ENCODE measurements at regions of chr15 and their contacts with region 1.

Region 1: DNA sequence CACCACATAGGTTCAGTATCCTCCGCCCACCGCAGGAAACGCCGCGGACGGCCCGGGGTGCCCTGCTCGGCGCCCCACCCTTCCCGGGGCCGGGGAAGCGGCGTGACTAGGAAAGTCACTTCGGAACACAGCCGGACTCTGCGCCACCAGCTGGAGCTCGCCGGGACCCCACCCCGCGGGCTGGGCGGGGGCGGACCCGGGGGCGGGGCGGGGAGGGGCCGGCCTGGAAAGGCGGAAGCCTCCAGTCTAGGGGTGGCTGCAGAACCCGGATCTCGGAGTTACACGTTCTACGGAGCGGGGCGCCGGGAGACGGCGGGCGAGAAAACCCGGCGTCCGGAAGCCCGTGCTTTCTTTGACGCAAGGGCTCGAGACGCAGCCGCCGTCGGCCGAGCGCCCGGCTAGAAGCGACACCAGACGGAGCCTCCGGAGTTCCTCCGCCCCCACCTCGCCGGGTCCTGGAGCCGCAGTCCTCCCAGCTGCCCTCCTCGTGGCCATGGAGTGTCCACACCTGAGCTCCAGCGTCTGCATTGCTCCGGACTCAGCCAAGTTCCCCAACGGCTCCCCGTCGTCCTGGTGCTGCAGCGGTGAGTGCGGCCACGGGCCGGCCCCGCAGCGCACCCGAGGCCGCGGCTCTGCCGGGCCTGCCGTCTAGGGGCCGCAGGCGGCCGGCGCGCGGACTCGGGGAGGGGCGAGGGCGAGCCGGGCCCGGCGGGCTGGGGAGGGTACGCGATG is at the start of gene USP3:
- DNase-seq: peak; percentile 88 to 96 (median 93)
- ATAC-seq: peak; percentile 67
- H3K4me3 ChIP-seq: peak within 1 kb of the TSS; percentile 93
- H3K4me3 Mint-ChIP-seq: peak within 1 kb of the TSS; percentile 96
- H3K27ac ChIP-seq: peak within 1 kb of the TSS; percentile 97 to 99
- H3K27ac Mint-ChIP-seq: peak within 1 kb of the TSS; percentile 92
- H3K4me1 ChIP-seq: peaks cover 58% of the 10 kb centered on the region
- H3K4me1 Mint-ChIP-seq: peaks cover 77% of the 10 kb centered on the region
- H3K27me3 ChIP-seq: no peaks in the 10 kb centered on the region
- H3K27me3 Mint-ChIP-seq: no peaks in the 10 kb centered on the region
- CTCF ChIP-seq: peak; percentile 36
- total RNA-seq, gene USP3: 280 to 282 TPM

Region 2: GRCh38 chr15:63430766-63431449 is 73.5 kb before region 1 on chr15:
- CTCF ChIA-PET with region 1: no interaction called
- POLR2A ChIA-PET with region 1: no interaction called
- intact Hi-C with region 1: no loop called
- DNase-seq: no peak
- ATAC-seq: no peak
- H3K4me3 ChIP-seq: no peak overlapping the region
- H3K4me3 Mint-ChIP-seq: no peak overlapping the region
- H3K27ac ChIP-seq: no peak overlapping the region
- H3K27ac Mint-ChIP-seq: no peak overlapping the region
- H3K4me1 ChIP-seq: no peaks in the 10 kb centered on the region
- H3K4me1 Mint-ChIP-seq: peaks cover 13% of the 10 kb centered on the region
- H3K27me3 ChIP-seq: no peaks in the 10 kb centered on the region
- H3K27me3 Mint-ChIP-seq: peaks cover 3% of the 10 kb centered on the region
- CTCF ChIP-seq: no peak

Region 3: GRCh38 chr15:63473999-63474809 is 30.2 kb before region 1 on chr15:
- CTCF ChIA-PET with region 1: interaction called, 24 read pairs
- POLR2A ChIA-PET with region 1: interaction called, 367 read pairs
- intact Hi-C with region 1: loop called (anchors 1 kb)
- DNase-seq: peak in 11 of 14 experiments; percentile 26 to 87 (median 53)
- ATAC-seq: peak; percentile 57
- H3K4me3 ChIP-seq: no peak overlapping the region
- H3K4me3 Mint-ChIP-seq: peak overlapping the region; percentile 3
- H3K27ac ChIP-seq: peak overlapping the region in 1 of 2 donors; percentile 35
- H3K27ac Mint-ChIP-seq: peak overlapping the region; percentile 82
- H3K4me1 ChIP-seq: peaks cover 61% of the 10 kb centered on the region
- H3K4me1 Mint-ChIP-seq: peaks cover 68% of the 10 kb centered on the region
- H3K27me3 ChIP-seq: no peaks in the 10 kb centered on the region
- H3K27me3 Mint-ChIP-seq: no peaks in the 10 kb centered on the region
- CTCF ChIP-seq: no peak

Region 4: DNA sequence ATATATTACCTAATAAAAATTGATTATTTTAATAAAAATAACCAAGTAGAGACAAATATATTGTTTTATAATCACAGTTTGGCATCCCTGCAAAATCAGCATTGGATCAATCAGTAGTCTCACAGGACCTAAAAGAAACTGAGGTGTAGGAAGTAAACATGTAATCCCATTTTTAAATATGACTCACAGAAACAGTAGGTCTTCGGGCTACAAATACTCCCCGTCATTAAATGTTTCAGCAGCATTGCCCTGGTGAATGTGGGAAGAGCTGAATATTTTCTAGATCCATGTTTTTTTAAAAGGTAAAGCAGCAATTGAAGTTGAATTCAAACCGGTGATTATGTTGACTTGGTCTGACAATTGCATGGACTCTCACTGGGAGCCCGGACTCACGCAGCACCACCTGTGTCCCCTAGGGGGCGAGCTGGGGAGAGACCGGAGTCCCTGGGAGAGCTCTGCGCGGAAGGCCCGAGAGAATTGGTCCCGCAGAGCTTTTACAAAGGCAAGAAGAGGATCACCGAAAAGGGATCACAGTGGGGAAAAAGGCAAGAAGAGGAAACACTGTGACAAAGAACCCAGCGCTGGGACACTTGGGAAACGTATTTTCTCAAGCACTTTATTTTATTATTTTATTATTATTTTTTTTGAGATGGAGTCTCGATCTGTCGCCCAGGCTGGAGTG is 17.2 kb before region 1 on chr15:
- CTCF ChIA-PET with region 1: interaction called, 65 read pairs
- POLR2A ChIA-PET with region 1: interaction called, 367 read pairs
- intact Hi-C with region 1: loop called in 1 of 2 experiments (anchors 2 kb)
- DNase-seq: peak; percentile 79 to 93 (median 88)
- ATAC-seq: peak; percentile 90
- H3K4me3 ChIP-seq: no peak overlapping the region
- H3K4me3 Mint-ChIP-seq: peak overlapping the region; percentile 2
- H3K27ac ChIP-seq: peak overlapping the region in 1 of 2 donors; percentile 33
- H3K27ac Mint-ChIP-seq: peak overlapping the region; percentile 29
- H3K4me1 ChIP-seq: peaks cover 67% of the 10 kb centered on the region
- H3K4me1 Mint-ChIP-seq: peaks cover 67% of the 10 kb centered on the region
- H3K27me3 ChIP-seq: no peaks in the 10 kb centered on the region
- H3K27me3 Mint-ChIP-seq: no peaks in the 10 kb centered on the region
- CTCF ChIP-seq: peak; percentile 96

Region 5: GRCh38 chr15:63522225-63522578 is 17.8 kb after region 1 on chr15:
- CTCF ChIA-PET with region 1: interaction called, 18 read pairs
- POLR2A ChIA-PET with region 1: interaction called, 32 read pairs
- intact Hi-C with region 1: loop called in 1 of 2 experiments (anchors 2 kb)
- DNase-seq: no peak
- ATAC-seq: no peak
- H3K4me3 ChIP-seq: no peak overlapping the region
- H3K4me3 Mint-ChIP-seq: peak overlapping the region; percentile 36
- H3K27ac ChIP-seq: no peak overlapping the region
- H3K27ac Mint-ChIP-seq: no peak overlapping the region
- H3K4me1 ChIP-seq: peaks cover 59% of the 10 kb centered on the region
- H3K4me1 Mint-ChIP-seq: peaks cover 98% of the 10 kb centered on the region
- H3K27me3 ChIP-seq: no peaks in the 10 kb centered on the region
- H3K27me3 Mint-ChIP-seq: no peaks in the 10 kb centered on the region
- CTCF ChIP-seq: no peak

Region 6: DNA sequence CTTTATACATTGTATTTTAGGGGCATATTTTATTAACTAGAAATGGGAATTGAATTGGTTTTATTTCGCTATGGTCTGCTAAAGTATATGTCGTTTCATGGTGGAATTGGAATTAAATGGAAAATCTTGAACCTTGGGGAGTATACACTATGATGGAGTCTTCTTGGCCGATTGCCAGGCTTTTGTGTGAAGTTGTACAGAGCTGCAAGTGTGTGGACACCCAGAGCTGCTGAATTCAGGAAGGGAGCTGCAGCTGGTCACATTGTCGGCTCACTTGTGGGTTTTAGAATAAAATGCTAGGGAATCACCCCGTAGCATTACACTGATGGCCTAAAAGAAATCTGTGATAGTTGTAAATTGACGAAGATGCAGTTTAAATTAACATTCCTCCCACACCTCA is 35.1 kb after region 1 on chr15:
- CTCF ChIA-PET with region 1: interaction called, 4 read pairs
- POLR2A ChIA-PET with region 1: interaction called, 16 read pairs
- intact Hi-C with region 1: loop called in 1 of 2 experiments (anchors 5 kb)
- DNase-seq: peak in 3 of 14 experiments; percentile 28 to 30 (median 30)
- ATAC-seq: no peak
- H3K4me3 ChIP-seq: no peak overlapping the region
- H3K4me3 Mint-ChIP-seq: no peak overlapping the region
- H3K27ac ChIP-seq: no peak overlapping the region
- H3K27ac Mint-ChIP-seq: no peak overlapping the region
- H3K4me1 ChIP-seq: peaks cover 7% of the 10 kb centered on the region
- H3K4me1 Mint-ChIP-seq: peaks cover 69% of the 10 kb centered on the region
- H3K27me3 ChIP-seq: no peaks in the 10 kb centered on the region
- H3K27me3 Mint-ChIP-seq: no peaks in the 10 kb centered on the region
- CTCF ChIP-seq: no peak

Region 7: DNA sequence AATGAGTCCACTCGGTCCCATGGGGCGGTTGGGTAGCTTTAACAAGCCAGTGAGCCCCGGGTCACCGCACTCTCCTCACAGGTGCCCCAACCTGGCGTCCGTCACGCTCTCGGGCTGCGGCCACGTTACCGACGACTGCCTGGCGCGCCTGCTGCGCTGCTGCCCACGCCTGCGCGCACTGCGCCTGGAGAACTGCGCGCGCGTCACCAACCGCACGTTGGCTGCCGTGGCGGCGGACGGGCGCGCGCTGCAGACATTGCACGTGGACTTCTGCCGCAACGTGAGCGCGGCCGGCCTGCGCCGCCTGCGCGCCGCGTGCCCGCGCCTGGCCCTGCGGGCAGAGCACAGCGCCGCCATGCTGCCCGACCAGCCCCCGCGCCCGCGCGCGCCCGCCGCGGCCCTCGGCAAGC is 96.2 kb after region 1 on chr15:
- CTCF ChIA-PET with region 1: interaction called, 3 read pairs
- POLR2A ChIA-PET with region 1: interaction called, 39 read pairs
- intact Hi-C with region 1: loop called in 1 of 2 experiments (anchors 5 kb)
- DNase-seq: peak; percentile 78 to 98 (median 88)
- ATAC-seq: peak; percentile 77
- H3K4me3 ChIP-seq: peak overlapping the region; percentile 79
- H3K4me3 Mint-ChIP-seq: peak overlapping the region; percentile 95
- H3K27ac ChIP-seq: peak overlapping the region; percentile 63 to 75
- H3K27ac Mint-ChIP-seq: peak overlapping the region; percentile 90
- H3K4me1 ChIP-seq: peaks cover 55% of the 10 kb centered on the region
- H3K4me1 Mint-ChIP-seq: peaks cover 73% of the 10 kb centered on the region
- H3K27me3 ChIP-seq: no peaks in the 10 kb centered on the region
- H3K27me3 Mint-ChIP-seq: no peaks in the 10 kb centered on the region
- CTCF ChIP-seq: no peak

Region 8: GRCh38 chr15:63752075-63752684 is 247.8 kb after region 1 on chr15:
- CTCF ChIA-PET with region 1: no interaction called
- POLR2A ChIA-PET with region 1: no interaction called
- intact Hi-C with region 1: no loop called
- DNase-seq: peak in 9 of 14 experiments; percentile 15 to 74 (median 24)
- ATAC-seq: peak; percentile 73
- H3K4me3 ChIP-seq: no peak overlapping the region
- H3K4me3 Mint-ChIP-seq: no peak overlapping the region
- H3K27ac ChIP-seq: no peak overlapping the region
- H3K27ac Mint-ChIP-seq: peak overlapping the region; percentile 3
- H3K4me1 ChIP-seq: no peaks in the 10 kb centered on the region
- H3K4me1 Mint-ChIP-seq: peaks cover 6% of the 10 kb centered on the region
- H3K27me3 ChIP-seq: no peaks in the 10 kb centered on the region
- H3K27me3 Mint-ChIP-seq: no peaks in the 10 kb centered on the region
- CTCF ChIP-seq: peak; percentile 80

Measured in CD4-positive, alpha-beta T cell (primary cell).